IMR-90 (cell line): ENCODE measurements at regions of chr3 and their contacts with region 1.

Region 1: GRCh38 chr3:116707531-116707930 is 2.0 kb upstream of the TUSC7 start:
- DNase-seq: no peak
- ATAC-seq: no peak
- H3K4me3 ChIP-seq: no peak overlapping the region
- H3K27ac ChIP-seq: no peak overlapping the region
- H3K4me1 ChIP-seq: no peaks in the 10 kb centered on the region
- H3K27me3 ChIP-seq: no peaks in the 10 kb centered on the region
- CTCF ChIP-seq: no peak
- POLR2A ChIP-seq: no peak
- RAD21 ChIP-seq: no peak

Region 2: GRCh38 chr3:116749388-116749787 is 41.9 kb after region 1 on chr3:
- CTCF ChIA-PET with region 1: no interaction called
- POLR2A ChIA-PET with region 1: no interaction called
- dilution Hi-C with region 1: no loop called
- in situ Hi-C with region 1: no loop called
- intact Hi-C with region 1: loop called (anchors 1 kb)
- DNase-seq: peak; percentile 2
- ATAC-seq: peak; percentile 57; the same call in 1 of the 2 replicates
- H3K4me3 ChIP-seq: no peak overlapping the region
- H3K27ac ChIP-seq: no peak overlapping the region
- H3K4me1 ChIP-seq: no peaks in the 10 kb centered on the region
- H3K27me3 ChIP-seq: no peaks in the 10 kb centered on the region
- CTCF ChIP-seq: no peak
- POLR2A ChIP-seq: no peak
- RAD21 ChIP-seq: no peak